PC-9 (cell line): ENCODE measurements at regions of chr20 and their contacts with region 1.

Region 1: GRCh38 chr20:2814587-2815051 is at the start of gene C20orf141:
- DNase-seq: peak; percentile 89 to 92
- H3K4me3 ChIP-seq: no peak within 1 kb of the TSS
- H3K27ac ChIP-seq: peak within 1 kb of the TSS; percentile 63
- H3K4me1 ChIP-seq: peaks cover 28% of the 10 kb centered on the region
- H3K27me3 ChIP-seq: no peaks in the 10 kb centered on the region
- CTCF ChIP-seq: no peak
- total RNA-seq, gene C20orf141: not detected in 2 replicates

Region 2: DNA sequence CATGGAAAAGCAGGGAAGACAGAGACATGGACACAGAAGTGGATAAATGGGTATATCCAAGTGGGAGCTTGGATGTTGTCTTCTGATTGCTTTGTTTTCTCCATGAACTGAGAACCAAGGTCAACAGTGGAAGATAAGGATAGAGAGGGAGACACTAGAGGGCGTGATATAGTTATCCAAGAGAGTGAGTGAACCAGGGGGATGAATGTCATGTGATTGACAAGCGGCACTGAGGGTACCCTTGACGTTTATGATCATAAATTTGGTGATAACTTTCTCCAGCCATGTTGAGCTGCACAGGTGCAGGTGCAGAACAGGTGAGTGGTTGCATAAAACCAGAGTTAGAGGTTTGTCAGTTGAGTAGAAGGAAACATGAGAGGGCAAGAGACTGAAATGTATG is 101.3 kb before region 1 on chr20:
- CTCF ChIA-PET with region 1: no interaction called
- POLR2A ChIA-PET with region 1: no interaction called
- intact Hi-C with region 1: no loop called
- DNase-seq: no peak
- H3K4me3 ChIP-seq: no peak overlapping the region
- H3K27ac ChIP-seq: no peak overlapping the region
- H3K4me1 ChIP-seq: no peaks in the 10 kb centered on the region
- H3K27me3 ChIP-seq: peaks cover 62% of the 10 kb centered on the region
- CTCF ChIP-seq: no peak; the same call in 1 of the 2 replicates

Region 3: GRCh38 chr20:2767768-2768631 is 46.6 kb before region 1 on chr20:
- CTCF ChIA-PET with region 1: interaction called, 3 read pairs
- POLR2A ChIA-PET with region 1: no interaction called
- intact Hi-C with region 1: loop called (anchors 1 kb)
- DNase-seq: peak; percentile 85 to 94
- H3K4me3 ChIP-seq: no peak overlapping the region
- H3K27ac ChIP-seq: no peak overlapping the region
- H3K4me1 ChIP-seq: peaks cover 8% of the 10 kb centered on the region
- H3K27me3 ChIP-seq: no peaks in the 10 kb centered on the region
- CTCF ChIP-seq: no peak

Region 4: GRCh38 chr20:3204124-3204822 is 389.7 kb after region 1 on chr20 and contains the start of gene DDRGK1:
- CTCF ChIA-PET with region 1: no interaction called
- POLR2A ChIA-PET with region 1: interaction called, 24 read pairs
- intact Hi-C with region 1: no loop called
- DNase-seq: peak; percentile 68 to 92
- H3K4me3 ChIP-seq: peak within 1 kb of the TSS; percentile 89
- H3K27ac ChIP-seq: peak within 1 kb of the TSS; percentile 54
- H3K4me1 ChIP-seq: peaks cover 14% of the 10 kb centered on the region
- H3K27me3 ChIP-seq: no peaks in the 10 kb centered on the region
- CTCF ChIP-seq: no peak
- total RNA-seq, gene DDRGK1: 70.4 and 87.6 TPM in 2 replicates

Region 5: DNA sequence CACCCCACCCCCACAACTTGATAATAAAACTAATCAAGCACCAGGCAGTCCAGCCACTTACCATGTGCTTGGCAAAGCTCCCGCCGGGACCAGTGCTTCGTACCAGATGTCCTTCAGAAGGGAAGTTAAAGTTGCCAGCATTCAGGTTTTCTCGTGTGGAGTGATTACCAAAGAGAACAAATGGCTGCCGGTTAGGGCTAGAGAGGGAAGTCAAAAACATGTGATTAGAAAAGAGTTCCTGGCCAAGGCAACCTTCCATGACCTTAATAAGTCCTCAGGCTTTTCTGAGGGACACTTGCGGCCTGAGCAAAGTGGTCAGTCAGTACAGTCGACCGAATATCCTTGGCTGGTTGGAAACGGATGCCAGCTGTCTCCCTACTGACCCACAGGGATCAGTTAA is 525.8 kb after region 1 on chr20:
- CTCF ChIA-PET with region 1: no interaction called
- POLR2A ChIA-PET with region 1: no interaction called
- intact Hi-C with region 1: no loop called
- DNase-seq: no peak
- H3K4me3 ChIP-seq: no peak overlapping the region
- H3K27ac ChIP-seq: no peak overlapping the region
- H3K4me1 ChIP-seq: no peaks in the 10 kb centered on the region
- H3K27me3 ChIP-seq: no peaks in the 10 kb centered on the region
- CTCF ChIP-seq: no peak